B cell (primary cell): ENCODE measurements at regions of chr7 and their contacts with region 1.

Region 1: GRCh38 chr7:6706677-6707544 is at the start of gene ZNF12:
- DNase-seq: peak; percentile 96
- ATAC-seq: peak; percentile 91
- H3K4me3 ChIP-seq: peak within 1 kb of the TSS; percentile 67 to 90 (median 84)
- H3K4me3 Mint-ChIP-seq: peak within 1 kb of the TSS; percentile 91
- H3K27ac ChIP-seq: peak within 1 kb of the TSS; percentile 71 to 84
- H3K27ac Mint-ChIP-seq: peak within 1 kb of the TSS; percentile 91
- H3K4me1 ChIP-seq: peaks cover 26 to 28% of the 10 kb centered on the region in 2 donors
- H3K4me1 Mint-ChIP-seq: peaks cover 35% of the 10 kb centered on the region
- H3K27me3 ChIP-seq: peaks cover 0 to 3% (median 0%) of the 10 kb centered on the region in 4 experiments
- H3K27me3 Mint-ChIP-seq: peaks cover 4% of the 10 kb centered on the region
- CTCF ChIP-seq: no peak
- total RNA-seq, gene ZNF12: 41.3 and 48.8 TPM in 2 replicates

Region 2: GRCh38 chr7:6589829-6590644 is 116.9 kb before region 1 on chr7 and contains the start of gene INTS15:
- CTCF ChIA-PET with region 1: no interaction called
- POLR2A ChIA-PET with region 1: no interaction called
- intact Hi-C with region 1: loop called (anchors 5 kb)
- DNase-seq: peak; percentile 94
- ATAC-seq: peak; percentile 91
- H3K4me3 ChIP-seq: peak within 1 kb of the TSS; percentile 45 to 82 (median 74)
- H3K4me3 Mint-ChIP-seq: peak within 1 kb of the TSS; percentile 88
- H3K27ac ChIP-seq: peak within 1 kb of the TSS; percentile 54 to 76
- H3K27ac Mint-ChIP-seq: peak within 1 kb of the TSS; percentile 88
- H3K4me1 ChIP-seq: peaks cover 15 to 19% of the 10 kb centered on the region in 2 donors
- H3K4me1 Mint-ChIP-seq: peaks cover 13% of the 10 kb centered on the region
- H3K27me3 ChIP-seq: no peaks in the 10 kb centered on the region
- H3K27me3 Mint-ChIP-seq: no peaks in the 10 kb centered on the region
- CTCF ChIP-seq: peak; percentile 74
- total RNA-seq, gene INTS15: 57.1 and 57.8 TPM in 2 replicates

Region 3: GRCh38 chr7:6637544-6638229 is 69.2 kb before region 1 on chr7:
- CTCF ChIA-PET with region 1: no interaction called
- POLR2A ChIA-PET with region 1: no interaction called
- intact Hi-C with region 1: loop called (anchors 5 kb)
- DNase-seq: peak; percentile 86
- ATAC-seq: peak; percentile 86
- H3K4me3 ChIP-seq: peak overlapping the region in 4 of 5 experiments; percentile 37 to 69 (median 61)
- H3K4me3 Mint-ChIP-seq: peak overlapping the region; percentile 86
- H3K27ac ChIP-seq: peak overlapping the region; percentile 18 to 79
- H3K27ac Mint-ChIP-seq: peak overlapping the region; percentile 88
- H3K4me1 ChIP-seq: peaks cover 20 to 25% of the 10 kb centered on the region in 2 donors
- H3K4me1 Mint-ChIP-seq: peaks cover 35% of the 10 kb centered on the region
- H3K27me3 ChIP-seq: no peaks in the 10 kb centered on the region
- H3K27me3 Mint-ChIP-seq: no peaks in the 10 kb centered on the region
- CTCF ChIP-seq: peak; percentile 69

Region 4: GRCh38 chr7:6729492-6730342 is 22.8 kb after region 1 on chr7:
- CTCF ChIA-PET with region 1: interaction called, 3 read pairs
- POLR2A ChIA-PET with region 1: interaction called, 6 read pairs
- intact Hi-C with region 1: loop called (anchors 1 kb)
- DNase-seq: peak; percentile 88
- ATAC-seq: peak; percentile 91
- H3K4me3 ChIP-seq: peak overlapping the region; percentile 52 to 93 (median 74)
- H3K4me3 Mint-ChIP-seq: peak overlapping the region; percentile 91
- H3K27ac ChIP-seq: peak overlapping the region; percentile 69 to 78
- H3K27ac Mint-ChIP-seq: peak overlapping the region; percentile 85
- H3K4me1 ChIP-seq: peaks cover 23 to 33% of the 10 kb centered on the region in 2 donors
- H3K4me1 Mint-ChIP-seq: peaks cover 34% of the 10 kb centered on the region
- H3K27me3 ChIP-seq: no peaks in the 10 kb centered on the region
- H3K27me3 Mint-ChIP-seq: no peaks in the 10 kb centered on the region
- CTCF ChIP-seq: no peak

Region 5: DNA sequence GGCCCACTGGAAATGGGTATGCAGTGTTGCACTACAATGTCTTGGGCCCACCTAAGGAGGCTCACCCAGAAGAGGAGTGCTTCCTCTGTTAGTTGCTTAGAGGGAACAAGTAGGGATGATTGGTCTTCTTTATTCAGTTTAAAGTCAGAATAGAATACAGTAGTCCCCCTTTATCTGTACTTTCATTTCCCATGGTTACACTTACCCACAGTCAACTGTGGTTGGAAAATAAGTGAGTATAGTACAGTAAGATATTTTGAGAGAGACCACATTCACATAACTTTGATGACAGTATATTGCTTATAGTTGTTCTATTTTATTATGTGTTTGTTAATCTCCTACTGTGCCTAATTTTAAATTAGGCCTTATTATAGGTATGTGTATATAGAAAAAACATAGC is 677.3 kb after region 1 on chr7:
- CTCF ChIA-PET with region 1: no interaction called
- POLR2A ChIA-PET with region 1: interaction called, 12 read pairs
- intact Hi-C with region 1: no loop called
- DNase-seq: no peak
- ATAC-seq: no peak
- H3K4me3 ChIP-seq: no peak overlapping the region
- H3K4me3 Mint-ChIP-seq: no peak overlapping the region
- H3K27ac ChIP-seq: no peak overlapping the region
- H3K27ac Mint-ChIP-seq: no peak overlapping the region
- H3K4me1 ChIP-seq: no peaks in the 10 kb centered on the region
- H3K4me1 Mint-ChIP-seq: peaks cover 4% of the 10 kb centered on the region
- H3K27me3 ChIP-seq: no peaks in the 10 kb centered on the region
- H3K27me3 Mint-ChIP-seq: no peaks in the 10 kb centered on the region
- CTCF ChIP-seq: no peak